ENCODE measurements at regions of chr18 and their contacts with region 1.

Region 1: DNA sequence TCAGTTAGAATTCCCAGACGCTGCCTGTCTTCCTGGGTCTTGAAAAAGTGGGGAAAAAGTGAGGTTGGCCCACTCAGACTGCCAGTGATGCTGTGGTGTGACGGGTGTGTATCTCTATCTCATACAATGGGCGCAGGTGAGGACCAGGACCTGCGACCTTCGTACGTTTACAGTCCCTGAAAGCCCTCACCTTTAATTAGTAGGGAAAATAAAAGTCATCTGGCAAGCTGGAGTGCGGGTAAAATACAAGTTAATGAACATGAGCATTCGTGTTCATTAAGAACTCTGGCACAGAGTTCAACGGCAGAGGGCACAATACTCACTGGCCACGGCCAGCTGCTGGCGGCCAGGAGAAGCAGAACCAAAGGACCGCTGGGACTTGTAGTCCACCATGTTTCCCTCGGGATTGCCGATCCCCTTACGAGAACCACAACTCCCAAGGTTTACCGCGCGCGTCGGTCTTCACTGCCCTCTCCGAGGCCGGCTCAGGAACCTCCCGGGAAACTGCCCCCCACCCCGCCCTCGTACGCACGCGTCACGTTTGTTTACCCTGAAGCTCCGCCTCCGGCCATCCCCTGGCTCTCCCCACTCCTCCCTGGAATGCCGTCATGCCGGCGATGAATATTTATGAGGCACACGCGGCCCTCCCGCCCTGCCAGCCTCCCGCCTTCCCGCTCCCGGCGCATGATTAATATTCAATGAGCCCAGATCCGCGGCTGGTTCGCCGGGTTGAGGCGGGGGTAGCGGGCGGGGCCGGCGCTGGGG is 488 bp upstream of the PHLPP1 start:
- DNase-seq: peak; percentile 99
- H3K4me3 Mint-ChIP-seq: peak overlapping the region; percentile 76
- H3K27ac Mint-ChIP-seq: peak overlapping the region; percentile 98
- H3K4me1 Mint-ChIP-seq: peaks cover 20% of the 10 kb centered on the region
- H3K27me3 Mint-ChIP-seq: no peaks in the 10 kb centered on the region
- CTCF ChIP-seq: peak; percentile 61

Region 2: GRCh38 chr18:62759704-62760402 is 45.0 kb after region 1 on chr18:
- CTCF ChIA-PET with region 1: interaction called, 11 read pairs
- POLR2A ChIA-PET with region 1: interaction called, 316 read pairs
- intact Hi-C with region 1: loop called (anchors 2 kb)
- DNase-seq: peak; percentile 80
- H3K4me3 Mint-ChIP-seq: peak overlapping the region; percentile 63
- H3K27ac Mint-ChIP-seq: peak overlapping the region; percentile 92
- H3K4me1 Mint-ChIP-seq: peaks cover 58% of the 10 kb centered on the region
- H3K27me3 Mint-ChIP-seq: no peaks in the 10 kb centered on the region
- CTCF ChIP-seq: no peak

Region 3: GRCh38 chr18:62784966-62785413 is 70.1 kb after region 1 on chr18:
- CTCF ChIA-PET with region 1: interaction called, 5 read pairs
- POLR2A ChIA-PET with region 1: interaction called, 62 read pairs
- intact Hi-C with region 1: loop called (anchors 1 kb)
- DNase-seq: no peak
- H3K4me3 Mint-ChIP-seq: no peak overlapping the region
- H3K27ac Mint-ChIP-seq: peak overlapping the region; percentile 95
- H3K4me1 Mint-ChIP-seq: peaks cover 37% of the 10 kb centered on the region
- H3K27me3 Mint-ChIP-seq: no peaks in the 10 kb centered on the region
- CTCF ChIP-seq: no peak

Region 4: DNA sequence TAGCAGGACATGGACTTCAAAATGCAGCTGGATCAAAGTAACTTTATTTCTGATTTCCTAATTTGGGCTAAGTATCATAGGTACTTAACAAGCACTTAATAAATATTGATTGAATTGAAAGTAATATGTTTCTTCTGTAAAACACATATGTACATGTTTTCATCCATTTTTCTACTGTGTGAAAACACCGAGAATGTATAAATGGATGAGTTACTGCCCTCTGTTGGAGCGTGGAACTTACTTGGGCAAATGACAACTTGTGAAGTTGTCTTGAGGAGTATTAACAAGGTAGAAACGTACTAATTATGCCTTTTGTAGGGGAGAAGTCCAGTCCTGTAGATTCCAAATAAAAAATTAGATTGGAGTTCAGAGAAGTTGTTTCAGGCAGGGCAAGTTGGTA is 87.7 kb after region 1 on chr18:
- CTCF ChIA-PET with region 1: interaction called, 18 read pairs
- POLR2A ChIA-PET with region 1: interaction called, 62 read pairs
- intact Hi-C with region 1: loop called (anchors 1 kb)
- DNase-seq: peak; percentile 47
- H3K4me3 Mint-ChIP-seq: no peak overlapping the region
- H3K27ac Mint-ChIP-seq: no peak overlapping the region
- H3K4me1 Mint-ChIP-seq: peaks cover 5% of the 10 kb centered on the region
- H3K27me3 Mint-ChIP-seq: no peaks in the 10 kb centered on the region
- CTCF ChIP-seq: peak; percentile 40

Region 5: DNA sequence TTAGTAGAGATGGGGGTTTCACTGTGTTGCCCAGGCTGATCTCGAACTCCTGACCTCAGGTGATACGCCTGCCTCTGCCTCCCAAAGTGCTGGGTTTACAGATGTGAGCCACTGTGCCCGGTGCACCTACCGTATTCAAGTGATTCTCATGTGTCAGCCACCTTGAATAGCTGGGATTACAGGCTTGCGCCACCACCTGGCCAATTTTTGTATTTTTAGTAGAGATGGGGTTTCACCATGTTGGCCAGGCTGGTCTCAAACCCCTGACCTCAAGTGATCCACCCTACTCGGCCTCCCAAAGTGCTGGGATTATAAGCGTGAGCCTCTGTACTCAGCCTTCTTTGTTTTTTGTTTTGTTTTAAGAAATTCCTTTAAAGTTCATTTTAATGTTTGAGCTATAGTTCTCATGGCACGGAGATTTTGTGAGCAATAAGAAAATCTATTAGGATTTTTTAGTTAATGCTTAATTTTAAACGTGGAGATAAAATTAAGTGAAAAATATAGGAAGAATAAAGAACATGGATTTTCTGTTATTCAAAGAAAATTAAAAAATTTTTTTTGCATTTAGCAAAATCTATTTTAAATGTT is 243.1 kb after region 1 on chr18:
- CTCF ChIA-PET with region 1: interaction called, 13 read pairs
- POLR2A ChIA-PET with region 1: interaction called, 5 read pairs
- intact Hi-C with region 1: loop called (anchors 1 kb)
- DNase-seq: peak; percentile 63
- H3K4me3 Mint-ChIP-seq: no peak overlapping the region
- H3K27ac Mint-ChIP-seq: no peak overlapping the region
- H3K4me1 Mint-ChIP-seq: no peaks in the 10 kb centered on the region
- H3K27me3 Mint-ChIP-seq: no peaks in the 10 kb centered on the region
- CTCF ChIP-seq: peak; percentile 49

Region 6: DNA sequence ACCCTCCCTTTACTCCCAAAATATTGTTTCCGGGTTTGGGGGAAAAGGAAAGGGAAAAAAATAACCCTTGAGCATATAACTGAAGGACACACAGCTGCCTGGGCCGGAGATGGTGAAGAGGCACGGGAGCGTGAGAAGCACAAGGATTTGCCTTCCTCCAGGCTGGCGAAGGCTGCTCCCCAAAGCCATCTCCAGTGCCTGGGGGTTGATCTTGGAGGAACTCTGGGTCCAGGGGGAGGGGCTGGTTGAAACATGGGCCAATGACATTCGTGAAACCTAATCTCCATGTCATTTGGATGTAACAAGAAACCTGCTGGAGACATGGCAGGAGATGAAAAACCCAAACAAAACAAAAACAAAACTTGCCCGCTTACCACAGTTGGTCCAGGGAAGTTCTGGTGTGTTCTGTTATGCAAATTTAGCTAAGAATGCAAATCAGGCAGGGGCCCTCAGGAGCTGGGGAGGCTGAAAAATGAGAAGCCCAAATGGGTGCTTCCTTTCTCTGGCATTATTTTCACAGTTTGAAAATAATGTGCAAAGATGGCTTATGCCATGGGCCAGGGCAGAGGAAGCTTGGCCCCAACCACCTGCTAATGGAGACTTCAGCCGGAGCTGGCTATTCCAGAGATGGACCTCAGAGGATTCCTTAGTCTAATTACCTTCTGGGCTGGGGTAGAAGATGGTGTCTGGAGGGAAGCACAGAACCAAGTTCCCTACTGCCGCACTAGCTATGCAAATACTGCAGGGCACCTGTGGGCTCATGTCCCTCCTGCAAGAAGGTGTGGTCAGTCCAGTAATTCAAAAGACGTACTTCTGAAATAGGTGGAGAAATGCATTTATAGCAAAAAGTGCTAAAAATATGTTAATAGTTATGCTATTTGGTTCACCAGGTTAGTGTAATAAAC is 423.8 kb after region 1 on chr18:
- CTCF ChIA-PET with region 1: no interaction called
- POLR2A ChIA-PET with region 1: no interaction called
- intact Hi-C with region 1: no loop called
- DNase-seq: no peak
- H3K4me3 Mint-ChIP-seq: no peak overlapping the region
- H3K27ac Mint-ChIP-seq: no peak overlapping the region
- H3K4me1 Mint-ChIP-seq: no peaks in the 10 kb centered on the region
- H3K27me3 Mint-ChIP-seq: peaks cover 22% of the 10 kb centered on the region
- CTCF ChIP-seq: no peak